Activated CD4-positive, alpha-beta T cell treated with anti-CD3 and anti-CD28 coated beads, Interleukin-2, amount 10 ng/mL, durations not matched to agents 24 days and 14 days (primary cell): ENCODE measurements at regions of chr10 and their contacts with region 1.

Region 1: DNA sequence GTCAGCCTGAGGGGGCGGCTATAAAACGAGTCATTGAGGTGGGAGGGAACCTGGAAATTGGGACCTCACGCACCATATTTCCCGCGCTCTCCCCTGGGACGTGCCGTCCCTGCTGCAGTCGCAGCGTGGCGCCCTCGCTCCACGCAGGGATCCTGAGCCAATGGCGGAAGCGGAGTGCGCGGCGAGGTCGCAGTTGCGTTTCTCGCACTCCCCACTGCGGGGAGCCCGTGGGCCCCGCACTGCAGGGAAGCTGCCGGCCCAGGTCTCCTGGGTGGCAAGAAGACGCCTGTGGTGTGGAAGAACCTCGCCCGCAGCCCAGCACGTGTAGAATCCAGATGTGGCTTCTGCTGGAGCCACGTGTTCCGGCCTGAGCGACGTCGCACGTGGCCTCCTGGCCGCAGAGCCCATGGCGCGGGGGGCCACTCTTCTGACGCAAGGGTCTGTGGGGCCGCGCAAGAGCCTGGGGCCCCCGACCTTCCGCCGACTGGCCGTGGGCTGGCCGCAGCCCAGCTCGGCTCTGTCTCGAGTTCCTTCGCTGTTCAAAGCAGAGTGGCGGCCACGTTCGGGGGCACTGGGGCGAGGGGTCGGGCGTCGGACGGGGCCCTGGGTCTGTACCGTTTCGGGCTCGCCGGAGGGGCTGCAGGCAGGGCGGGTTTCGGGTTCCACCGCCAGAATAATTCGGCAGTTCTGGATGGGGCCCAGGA is 26.4 kb downstream of the HIF1AN start:
- DNase-seq: peak; percentile 95
- H3K4me3 Mint-ChIP-seq: peak overlapping the region; percentile 36
- H3K27ac Mint-ChIP-seq: peak overlapping the region; percentile 3
- H3K4me1 Mint-ChIP-seq: peaks cover 12% of the 10 kb centered on the region
- H3K27me3 Mint-ChIP-seq: peaks cover 24% of the 10 kb centered on the region

Region 2: GRCh38 chr10:100653957-100654781 is 92.0 kb after region 1 on chr10:
- intact Hi-C with region 1: loop called (anchors 10 kb)
- DNase-seq: peak; percentile 72
- H3K4me3 Mint-ChIP-seq: peak overlapping the region; percentile 77
- H3K27ac Mint-ChIP-seq: peak overlapping the region; percentile 22
- H3K4me1 Mint-ChIP-seq: peaks cover 27% of the 10 kb centered on the region
- H3K27me3 Mint-ChIP-seq: peaks cover 66% of the 10 kb centered on the region

Region 3: DNA sequence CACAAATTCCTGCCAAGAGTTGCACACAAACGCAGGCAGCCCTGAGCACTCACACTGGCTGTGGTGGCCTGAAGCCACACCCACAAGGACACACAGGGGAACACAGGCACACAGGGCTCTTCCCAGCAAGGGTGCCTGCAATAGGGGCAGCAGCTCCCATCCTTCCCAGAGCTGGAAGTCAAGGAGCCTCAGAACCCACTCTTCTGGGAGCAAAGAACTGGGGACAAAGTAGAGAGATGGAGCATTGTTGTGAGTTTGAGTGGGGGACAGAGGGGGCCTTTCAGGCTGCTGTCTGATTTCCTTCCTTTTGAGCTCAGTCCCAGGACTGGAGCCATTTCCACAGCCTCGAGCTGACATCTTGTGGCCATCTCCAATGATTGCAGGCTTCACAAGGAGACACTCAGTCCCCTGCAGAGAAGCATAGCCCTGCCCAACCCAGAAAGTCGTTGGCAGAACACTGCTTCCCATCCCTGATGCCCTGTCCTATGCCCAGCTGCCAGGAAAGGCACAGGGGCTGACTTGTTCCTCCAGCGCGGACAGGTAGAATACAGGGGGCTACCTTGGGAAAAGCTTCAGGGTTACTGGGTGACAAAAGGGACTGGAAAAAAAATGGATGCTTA is 316.2 kb after region 1 on chr10:
- intact Hi-C with region 1: loop called (anchors 5 kb)
- DNase-seq: peak; percentile 76
- H3K4me3 Mint-ChIP-seq: no peak overlapping the region
- H3K27ac Mint-ChIP-seq: no peak overlapping the region
- H3K4me1 Mint-ChIP-seq: no peaks in the 10 kb centered on the region
- H3K27me3 Mint-ChIP-seq: peaks cover 18% of the 10 kb centered on the region